T-cell (primary cell): ENCODE measurements at regions of chr18 and their contacts with region 1.

Region 1: DNA sequence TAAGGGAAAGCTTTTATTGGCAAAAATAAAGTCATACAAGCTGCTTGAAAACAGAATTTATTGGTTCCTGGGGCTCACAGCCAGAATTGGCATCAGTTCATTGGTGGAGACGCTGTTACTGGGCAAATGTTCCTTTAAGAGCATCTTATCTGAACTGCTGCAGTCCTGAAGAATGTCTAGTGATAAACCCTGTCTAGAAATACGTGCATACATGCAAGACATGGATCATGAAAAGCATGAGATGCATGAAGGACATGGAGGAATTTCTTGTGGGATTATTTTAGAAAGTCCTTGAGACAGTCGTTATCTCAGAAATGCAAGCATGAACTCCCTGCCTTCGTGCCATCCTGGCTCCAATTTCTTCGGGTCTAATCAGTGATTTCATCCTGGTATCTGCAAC is 32.5 kb upstream of the FHOD3 start:
- DNase-seq: no peak
- ATAC-seq: no peak
- H3K4me3 ChIP-seq: no peak overlapping the region
- H3K4me3 Mint-ChIP-seq: no peak overlapping the region
- H3K27ac ChIP-seq: no peak overlapping the region
- H3K27ac Mint-ChIP-seq: no peak overlapping the region
- H3K4me1 ChIP-seq: no peaks in the 10 kb centered on the region
- H3K4me1 Mint-ChIP-seq: no peaks in the 10 kb centered on the region
- H3K27me3 ChIP-seq: peaks cover 0 to 6% of the 10 kb centered on the region in 2 experiments
- H3K27me3 Mint-ChIP-seq: peaks cover 6 to 11% of the 10 kb centered on the region in 2 donors

Region 2: GRCh38 chr18:34976899-34977837 is 1287.8 kb before region 1 on chr18:
- CTCF ChIA-PET with region 1: no interaction called
- POLR2A ChIA-PET with region 1: interaction called in 1 of 2 experiments, 11 read pairs
- DNase-seq: peak; percentile 54 to 83 (median 72)
- ATAC-seq: peak; percentile 81 to 90 (median 83)
- H3K4me3 ChIP-seq: peak overlapping the region; percentile 88 to 96
- H3K4me3 Mint-ChIP-seq: peak overlapping the region; percentile 86 to 91 (median 91)
- H3K27ac ChIP-seq: no peak overlapping the region
- H3K27ac Mint-ChIP-seq: peak overlapping the region in 1 of 2 donors; percentile 62
- H3K4me1 ChIP-seq: peaks cover 10 to 28% of the 10 kb centered on the region in 2 experiments
- H3K4me1 Mint-ChIP-seq: peaks cover 27 to 33% (median 28%) of the 10 kb centered on the region in 3 donors
- H3K27me3 ChIP-seq: peaks cover 0 to 10% of the 10 kb centered on the region in 2 experiments
- H3K27me3 Mint-ChIP-seq: peaks cover 0 to 22% of the 10 kb centered on the region in 2 donors